Ascending aorta (tissue), 2 donors: ENCODE measurements at regions of chr11 and their contacts with region 1.

Region 1: GRCh38 chr11:93234602-93235207 is 36.9 kb upstream of the SLC36A4 start:
- DNase-seq: peak; percentile 8 to 80
- H3K4me3 ChIP-seq: no peak overlapping the region
- H3K27ac ChIP-seq: no peak overlapping the region
- H3K4me1 ChIP-seq: no peaks in the 10 kb centered on the region
- H3K27me3 ChIP-seq: no peaks in the 10 kb centered on the region
- CTCF ChIP-seq: peak; percentile 78 to 95 (median 81)

Region 2: DNA sequence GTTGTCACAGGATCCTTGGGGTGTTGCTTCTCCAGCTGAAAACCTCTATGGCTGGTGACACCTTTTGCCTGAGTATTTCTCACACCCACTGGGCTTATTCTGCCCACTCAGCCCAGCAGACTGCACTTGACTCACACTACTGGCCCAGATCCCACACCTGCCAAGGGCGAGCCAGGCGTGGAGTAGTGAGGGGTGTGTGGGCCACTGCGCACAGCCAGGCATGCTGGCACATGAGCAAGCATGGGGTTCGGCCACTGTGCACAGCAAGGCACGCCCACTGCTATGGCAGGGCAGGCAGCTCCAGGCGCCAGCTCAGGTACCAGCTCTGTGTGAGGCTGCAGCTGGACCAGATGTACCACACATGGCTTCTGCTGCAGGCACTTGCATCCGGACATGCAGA is 381.8 kb before region 1 on chr11:
- intact Hi-C with region 1: no loop called
- DNase-seq: no peak
- H3K4me3 ChIP-seq: no peak overlapping the region
- H3K27ac ChIP-seq: no peak overlapping the region
- H3K4me1 ChIP-seq: no peaks in the 10 kb centered on the region
- H3K27me3 ChIP-seq: no peaks in the 10 kb centered on the region
- CTCF ChIP-seq: no peak

Region 3: DNA sequence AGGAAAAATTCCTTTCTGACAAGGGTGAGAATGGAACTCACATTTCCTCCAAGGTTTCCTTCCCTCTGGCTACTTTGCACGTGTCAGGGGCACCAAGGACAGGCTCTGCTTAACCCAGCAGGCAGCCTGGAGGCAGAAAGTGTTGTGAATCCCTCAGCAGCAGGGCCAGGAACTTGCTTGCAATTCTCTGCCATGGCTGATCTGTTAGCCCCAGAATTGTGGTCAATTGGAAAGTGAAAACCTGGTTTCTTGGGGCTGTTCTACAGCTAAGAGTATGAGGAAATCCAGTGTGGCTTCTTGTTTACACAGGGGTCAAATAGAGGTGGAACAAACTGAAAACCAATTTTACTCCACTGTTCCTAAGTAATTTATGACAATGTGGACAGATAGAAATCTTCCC is 388.5 kb after region 1 on chr11:
- intact Hi-C with region 1: loop called (anchors 1 kb)
- DNase-seq: no peak
- H3K4me3 ChIP-seq: no peak overlapping the region
- H3K27ac ChIP-seq: no peak overlapping the region
- H3K4me1 ChIP-seq: no peaks in the 10 kb centered on the region
- H3K27me3 ChIP-seq: no peaks in the 10 kb centered on the region
- CTCF ChIP-seq: no peak

Region 4: GRCh38 chr11:93652161-93652597 is 417.5 kb after region 1 on chr11:
- intact Hi-C with region 1: loop called (anchors 1 kb)
- DNase-seq: no peak
- H3K4me3 ChIP-seq: no peak overlapping the region
- H3K27ac ChIP-seq: no peak overlapping the region
- H3K4me1 ChIP-seq: no peaks in the 10 kb centered on the region
- H3K27me3 ChIP-seq: no peaks in the 10 kb centered on the region
- CTCF ChIP-seq: peak; percentile 52 to 81 (median 66)